HCT116 (cell line): ENCODE measurements at regions of chr11 and their contacts with region 1.

Region 1: GRCh38 chr11:63768237-63769043 is at the start of gene ZFTA:
- DNase-seq: no peak
- ATAC-seq: peak; percentile 74
- H3K4me3 ChIP-seq: peak within 1 kb of the TSS; percentile 78 to 88
- H3K27ac ChIP-seq: peak within 1 kb of the TSS; percentile 90
- H3K4me1 ChIP-seq: peaks cover 14 to 29% of the 10 kb centered on the region in 2 experiments
- H3K27me3 ChIP-seq: no peaks in the 10 kb centered on the region
- CTCF ChIP-seq: peak in 1 of 3 experiments; percentile 43; a peak in 4 of 6 replicates
- POLR2A ChIP-seq: no peak
- RAD21 ChIP-seq: peak; percentile 58
- total RNA-seq, gene ZFTA: 14.7 TPM

Region 2: DNA sequence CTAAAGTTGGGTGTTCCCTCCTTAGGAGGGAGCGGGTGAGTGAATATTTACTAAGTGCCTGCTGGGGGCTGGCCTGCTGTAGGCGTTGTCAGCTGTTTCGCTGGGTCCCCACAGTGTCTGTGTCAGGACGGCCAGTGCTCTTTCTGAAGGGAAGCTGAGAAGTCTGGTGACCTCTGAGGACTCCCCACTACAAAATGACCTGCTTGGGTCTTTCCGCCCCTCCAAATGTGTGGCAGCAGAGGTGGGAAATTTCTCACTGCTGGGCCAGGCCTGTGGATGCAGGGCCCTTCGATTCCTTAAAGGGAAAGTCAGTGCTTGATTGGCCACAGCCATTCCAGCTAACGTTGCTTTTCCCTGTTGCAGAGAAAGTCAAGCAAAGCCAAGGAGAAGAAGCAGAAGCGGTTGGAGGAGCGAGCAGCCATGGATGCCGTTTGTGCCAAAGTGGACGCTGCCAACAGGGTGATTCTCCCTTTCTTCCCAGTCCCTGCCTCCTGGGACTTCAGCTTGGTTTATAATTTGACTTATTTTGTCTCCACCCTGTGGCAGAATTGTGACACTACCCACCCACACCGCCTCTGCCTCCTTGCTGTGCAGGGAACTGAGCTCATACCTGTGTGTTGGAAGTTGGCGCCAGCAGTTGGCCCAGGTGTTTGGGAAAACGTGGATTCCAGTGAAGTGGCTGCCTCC is 177.2 kb after region 1 on chr11:
- CTCF ChIA-PET with region 1: interaction called, 20 read pairs
- POLR2A ChIA-PET with region 1: no interaction called
- RAD21 ChIA-PET with region 1: no interaction called
- intact Hi-C with region 1: loop called (anchors 2 kb)
- DNase-seq: peak; percentile 36
- ATAC-seq: peak; percentile 97
- H3K4me3 ChIP-seq: no peak overlapping the region
- H3K27ac ChIP-seq: peak overlapping the region; percentile 3
- H3K4me1 ChIP-seq: peaks cover 0 to 12% of the 10 kb centered on the region in 2 experiments; a peak in 2 of 4 replicates
- H3K27me3 ChIP-seq: no peaks in the 10 kb centered on the region
- CTCF ChIP-seq: peak; percentile 65 to 87 (median 75)
- POLR2A ChIP-seq: no peak
- RAD21 ChIP-seq: peak; percentile 93